ENCODE measurements at regions of chr12 and their contacts with region 1.

Region 1: GRCh38 chr12:95815635-95816212 is 25.2 kb upstream of the NTN4 start:
- DNase-seq: no peak
- ATAC-seq: peak; percentile 41 to 57
- H3K4me3 ChIP-seq: no peak overlapping the region
- H3K27ac ChIP-seq: no peak overlapping the region
- H3K4me1 ChIP-seq: no peaks in the 10 kb centered on the region
- H3K27me3 ChIP-seq: no peaks in the 10 kb centered on the region

Region 2: DNA sequence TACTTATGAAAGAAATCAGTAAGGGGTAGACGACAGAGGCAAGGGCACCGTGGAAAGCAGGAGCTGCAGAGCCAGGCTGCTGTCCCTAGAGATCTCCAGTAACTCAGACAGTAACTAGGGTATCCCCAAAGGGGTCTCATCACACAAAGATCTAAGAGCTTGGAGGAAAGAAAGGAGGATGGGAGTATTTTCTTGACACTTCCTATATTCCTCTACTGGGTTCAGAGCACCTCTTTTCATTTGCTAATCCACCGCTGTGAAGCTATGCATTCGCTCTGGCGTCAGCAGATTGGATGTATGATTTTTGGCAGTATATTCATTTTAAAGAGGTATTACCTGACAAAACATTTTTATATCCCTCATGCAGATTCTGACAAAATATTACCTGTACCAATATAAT is 277.1 kb before region 1 on chr12:
- intact Hi-C with region 1: no loop called
- DNase-seq: no peak
- ATAC-seq: no peak
- H3K4me3 ChIP-seq: no peak overlapping the region
- H3K27ac ChIP-seq: no peak overlapping the region
- H3K4me1 ChIP-seq: no peaks in the 10 kb centered on the region
- H3K27me3 ChIP-seq: no peaks in the 10 kb centered on the region

Region 3: DNA sequence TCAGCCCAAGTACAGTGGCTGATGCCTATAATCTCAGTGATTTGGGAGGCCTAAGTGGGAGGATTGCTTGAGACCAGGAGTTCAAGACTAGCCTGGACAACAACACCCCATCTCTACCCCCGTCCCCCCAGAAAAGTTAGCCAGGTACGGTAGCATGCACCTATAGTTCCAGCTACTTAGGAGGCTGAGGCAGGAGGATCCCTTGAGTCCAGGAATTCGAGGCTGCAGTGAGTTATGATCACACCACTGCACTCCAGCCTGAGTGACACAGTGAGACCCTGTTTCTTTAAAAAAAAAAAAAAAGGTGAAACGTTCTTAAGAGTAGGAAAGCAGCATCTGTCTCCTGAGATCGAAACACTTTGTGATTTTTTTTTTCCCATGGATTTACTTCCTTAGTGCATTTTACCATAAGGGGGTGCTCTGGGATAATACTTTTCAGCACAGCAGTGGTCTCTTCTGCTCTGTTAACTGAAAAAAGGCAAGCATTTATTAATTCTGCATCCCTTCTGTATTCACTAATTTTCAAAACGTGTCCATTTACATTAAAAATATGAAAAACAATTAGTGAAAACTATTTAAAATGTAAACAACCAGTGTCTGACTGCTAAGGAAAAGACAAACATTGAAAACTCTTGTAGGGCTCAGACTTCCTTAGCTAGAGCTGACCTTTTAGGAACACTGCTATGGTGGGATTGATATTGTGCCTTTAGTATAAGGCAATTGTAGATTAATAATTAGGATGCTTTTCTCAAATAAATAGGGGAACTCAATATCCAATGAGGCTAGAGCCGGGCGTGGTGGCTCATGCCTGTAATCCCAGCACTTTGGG is 233.3 kb before region 1 on chr12:
- intact Hi-C with region 1: loop called (anchors 2 to 5 kb)
- DNase-seq: no peak
- ATAC-seq: peak; percentile 54
- H3K4me3 ChIP-seq: no peak overlapping the region
- H3K27ac ChIP-seq: no peak overlapping the region
- H3K4me1 ChIP-seq: no peaks in the 10 kb centered on the region
- H3K27me3 ChIP-seq: no peaks in the 10 kb centered on the region